K562 (cell line): ENCODE measurements at regions of chrX and their contacts with region 1.

Region 1: GRCh38 chrX:118847676-118848075 is 24.1 kb downstream of the ZCCHC12 start:
- DNase-seq: peak; percentile 34 to 65 (median 51)
- ATAC-seq: peak; percentile 82
- H3K4me3 ChIP-seq: no peak overlapping the region
- H3K27ac ChIP-seq: no peak overlapping the region
- H3K4me1 ChIP-seq: no peaks in the 10 kb centered on the region
- H3K27me3 ChIP-seq: no peaks in the 10 kb centered on the region; a peak in 2 of 5 replicates
- CTCF ChIP-seq: peak; percentile 46 to 82 (median 53); a peak in 5 of 6 replicates
- EP300 ChIP-seq: no peak
- POLR2A ChIP-seq: no peak
- RAD21 ChIP-seq: peak; percentile 81 to 87

Region 2: DNA sequence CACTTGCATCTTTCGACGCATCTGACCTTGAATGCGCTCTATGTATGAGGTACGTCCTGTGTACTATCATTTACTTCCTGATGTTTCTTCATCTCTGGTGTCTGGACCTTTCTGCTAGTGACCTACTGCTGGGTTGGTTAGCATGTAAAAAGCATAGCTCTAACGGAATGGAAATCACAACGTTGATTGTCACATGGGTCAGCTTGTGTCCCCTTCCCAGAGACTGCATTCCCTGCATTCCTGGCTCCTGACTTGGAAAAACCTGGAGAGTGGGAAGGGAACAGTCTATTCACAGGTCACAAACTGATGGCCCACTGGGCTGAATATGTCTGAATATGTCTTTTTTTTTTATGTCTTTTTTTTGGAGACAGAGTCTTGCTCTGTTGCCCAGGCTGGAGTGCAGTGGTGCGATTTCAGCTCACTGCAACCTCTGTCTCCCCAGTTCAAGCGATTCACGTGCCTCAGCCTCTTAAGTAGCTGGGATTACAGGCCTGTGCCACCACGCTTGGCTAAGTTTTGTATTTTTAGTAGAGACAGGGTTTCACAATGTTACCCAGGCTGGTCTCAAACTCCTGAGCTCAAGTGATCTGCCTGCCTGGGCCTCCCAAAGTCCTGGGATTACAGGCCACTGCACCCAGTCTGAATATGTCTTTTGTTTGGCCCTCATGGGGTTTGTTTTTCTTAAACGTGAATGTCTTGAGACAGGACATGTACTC is 143.0 kb after region 1 on chrX:
- CTCF ChIA-PET with region 1: no interaction called
- POLR2A ChIA-PET with region 1: no interaction called
- in situ Hi-C with region 1: loop called (anchors 10 kb)
- intact Hi-C with region 1: no loop called
- DNase-seq: no peak
- ATAC-seq: no peak
- H3K4me3 ChIP-seq: no peak overlapping the region
- H3K27ac ChIP-seq: no peak overlapping the region
- H3K4me1 ChIP-seq: no peaks in the 10 kb centered on the region
- H3K27me3 ChIP-seq: no peaks in the 10 kb centered on the region
- CTCF ChIP-seq: no peak
- EP300 ChIP-seq: no peak
- POLR2A ChIP-seq: no peak
- RAD21 ChIP-seq: no peak

Region 3: DNA sequence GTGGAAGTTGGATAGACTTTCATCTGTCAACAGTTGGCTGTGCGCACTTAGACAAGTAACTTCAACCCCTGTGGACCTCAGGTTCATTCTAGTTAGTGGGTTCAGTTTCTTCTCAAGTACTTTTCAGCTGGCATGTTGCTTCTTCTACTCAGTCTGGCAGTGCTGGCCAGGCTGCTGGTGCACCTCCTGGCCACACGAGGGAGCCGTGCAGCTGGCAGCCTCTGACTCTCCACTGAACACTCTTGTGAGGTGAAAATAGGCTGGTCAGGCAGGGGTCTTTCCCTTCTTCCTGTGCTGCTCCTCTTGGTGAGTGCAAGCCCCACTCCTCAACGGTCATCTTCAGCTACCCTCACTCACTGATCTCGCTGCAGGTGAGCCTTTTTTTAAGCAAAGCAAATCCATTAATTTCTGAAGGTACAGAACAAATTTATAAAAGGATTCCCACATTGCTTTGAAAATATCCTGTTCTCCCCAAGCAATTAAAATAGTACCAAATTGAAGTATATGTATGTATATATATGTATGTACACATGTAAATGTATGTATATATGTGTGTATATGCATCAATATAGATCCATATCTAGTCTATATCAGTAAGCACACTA is 157.3 kb after region 1 on chrX:
- CTCF ChIA-PET with region 1: interaction called, 5 read pairs
- POLR2A ChIA-PET with region 1: no interaction called
- in situ Hi-C with region 1: no loop called
- intact Hi-C with region 1: loop called (anchors 1 kb)
- DNase-seq: peak; percentile 45 to 52 (median 47)
- ATAC-seq: peak; percentile 97
- H3K4me3 ChIP-seq: no peak overlapping the region
- H3K27ac ChIP-seq: no peak overlapping the region
- H3K4me1 ChIP-seq: no peaks in the 10 kb centered on the region; a peak in 1 of 5 replicates
- H3K27me3 ChIP-seq: no peaks in the 10 kb centered on the region
- CTCF ChIP-seq: peak; percentile 67 to 87 (median 69)
- EP300 ChIP-seq: no peak
- POLR2A ChIP-seq: no peak
- RAD21 ChIP-seq: peak; percentile 39 to 59; a peak in 3 of 4 replicates

Region 4: DNA sequence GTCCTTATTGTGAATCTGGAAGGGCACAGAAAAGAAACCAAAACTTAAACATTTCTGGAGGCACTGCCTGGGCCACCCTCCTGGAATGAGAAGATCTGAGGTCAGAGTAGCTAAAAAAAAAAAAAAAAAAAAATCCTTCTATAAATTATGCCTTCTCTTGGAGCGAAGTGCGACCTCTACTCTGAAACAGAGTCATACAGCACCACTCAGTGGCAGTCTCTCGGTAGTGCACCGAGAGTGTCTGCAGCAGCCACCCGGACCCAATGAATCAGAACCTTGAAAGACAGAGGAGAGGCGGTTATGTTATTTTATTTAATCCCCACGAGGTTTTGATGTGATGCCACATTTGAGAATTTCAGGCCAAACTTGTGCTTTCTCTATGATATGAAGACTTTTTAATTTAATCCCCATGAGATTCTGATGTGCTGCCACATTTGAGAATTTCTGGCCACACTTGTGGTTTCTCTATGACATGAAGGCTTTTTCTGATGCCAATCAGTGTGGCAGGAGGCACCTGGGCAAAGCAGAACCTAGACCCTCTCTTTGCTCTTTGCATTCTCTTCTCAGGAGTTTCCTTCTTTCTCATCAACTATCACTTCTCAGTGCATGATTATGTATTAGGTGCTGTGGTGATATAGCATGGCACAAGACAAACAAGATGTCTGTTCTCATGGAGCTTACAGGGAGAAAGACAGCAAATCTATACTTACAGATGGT is 219.5 kb after region 1 on chrX:
- CTCF ChIA-PET with region 1: interaction called, 14 read pairs
- POLR2A ChIA-PET with region 1: no interaction called
- in situ Hi-C with region 1: no loop called
- intact Hi-C with region 1: loop called (anchors 1 kb)
- DNase-seq: peak; percentile 53 to 63 (median 62)
- ATAC-seq: peak; percentile 83
- H3K4me3 ChIP-seq: no peak overlapping the region
- H3K27ac ChIP-seq: no peak overlapping the region
- H3K4me1 ChIP-seq: peaks cover 0 to 9% of the 10 kb centered on the region in 2 experiments; a peak in 3 of 5 replicates
- H3K27me3 ChIP-seq: peaks cover 0 to 4% of the 10 kb centered on the region in 2 experiments; a peak in 1 of 5 replicates
- CTCF ChIP-seq: peak; percentile 70 to 81 (median 78)
- EP300 ChIP-seq: no peak
- POLR2A ChIP-seq: no peak
- RAD21 ChIP-seq: peak; percentile 72 to 73

Region 5: DNA sequence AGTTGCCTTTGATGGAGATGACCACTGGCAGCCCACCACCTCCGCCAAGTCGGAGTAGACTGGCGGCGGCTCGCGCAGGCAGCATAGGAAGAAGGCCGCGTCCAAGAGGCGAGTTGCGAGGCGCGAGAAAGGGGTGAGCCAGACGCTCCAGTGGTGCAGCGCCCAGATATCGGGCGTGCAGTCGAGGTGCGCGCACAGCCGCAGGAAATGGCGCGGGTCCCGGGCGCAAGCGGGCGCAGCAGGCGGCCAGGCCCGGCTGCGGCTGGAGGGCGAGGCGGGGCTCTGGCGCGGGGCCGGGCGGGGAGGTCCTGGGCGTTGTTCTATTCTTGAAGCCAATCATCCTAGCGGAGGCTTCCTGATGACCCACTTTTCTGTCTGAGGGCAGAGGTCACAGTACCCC is 375.3 kb after region 1 on chrX:
- CTCF ChIA-PET with region 1: interaction called, 3 read pairs
- POLR2A ChIA-PET with region 1: no interaction called
- in situ Hi-C with region 1: loop called (anchors 25 kb)
- intact Hi-C with region 1: loop called (anchors 2 kb)
- DNase-seq: no peak
- ATAC-seq: no peak
- H3K4me3 ChIP-seq: no peak overlapping the region
- H3K27ac ChIP-seq: no peak overlapping the region
- H3K4me1 ChIP-seq: no peaks in the 10 kb centered on the region
- H3K27me3 ChIP-seq: no peaks in the 10 kb centered on the region; a peak in 2 of 5 replicates
- CTCF ChIP-seq: no peak
- EP300 ChIP-seq: no peak
- POLR2A ChIP-seq: no peak
- RAD21 ChIP-seq: no peak